ENCODE measurements at regions of chr6 and their contacts with region 1.

Region 1: GRCh38 chr6:116217069-116217468 is 36.8 kb downstream of the TSPYL4 start:
- DNase-seq: peak; percentile 61
- H3K4me3 ChIP-seq: no peak overlapping the region
- H3K27ac ChIP-seq: no peak overlapping the region
- H3K4me1 ChIP-seq: peaks cover 9% of the 10 kb centered on the region
- H3K27me3 ChIP-seq: no peaks in the 10 kb centered on the region
- CTCF ChIP-seq: peak; percentile 15 to 36
- POLR2A ChIP-seq: no peak

Region 2: GRCh38 chr6:115729036-115729435 is 488.0 kb before region 1 on chr6:
- CTCF ChIA-PET with region 1: no interaction called
- POLR2A ChIA-PET with region 1: no interaction called
- dilution Hi-C with region 1: no loop called
- intact Hi-C with region 1: no loop called
- DNase-seq: no peak
- H3K4me3 ChIP-seq: no peak overlapping the region
- H3K27ac ChIP-seq: no peak overlapping the region
- H3K4me1 ChIP-seq: no peaks in the 10 kb centered on the region
- H3K27me3 ChIP-seq: no peaks in the 10 kb centered on the region
- CTCF ChIP-seq: no peak
- POLR2A ChIP-seq: no peak

Region 3: DNA sequence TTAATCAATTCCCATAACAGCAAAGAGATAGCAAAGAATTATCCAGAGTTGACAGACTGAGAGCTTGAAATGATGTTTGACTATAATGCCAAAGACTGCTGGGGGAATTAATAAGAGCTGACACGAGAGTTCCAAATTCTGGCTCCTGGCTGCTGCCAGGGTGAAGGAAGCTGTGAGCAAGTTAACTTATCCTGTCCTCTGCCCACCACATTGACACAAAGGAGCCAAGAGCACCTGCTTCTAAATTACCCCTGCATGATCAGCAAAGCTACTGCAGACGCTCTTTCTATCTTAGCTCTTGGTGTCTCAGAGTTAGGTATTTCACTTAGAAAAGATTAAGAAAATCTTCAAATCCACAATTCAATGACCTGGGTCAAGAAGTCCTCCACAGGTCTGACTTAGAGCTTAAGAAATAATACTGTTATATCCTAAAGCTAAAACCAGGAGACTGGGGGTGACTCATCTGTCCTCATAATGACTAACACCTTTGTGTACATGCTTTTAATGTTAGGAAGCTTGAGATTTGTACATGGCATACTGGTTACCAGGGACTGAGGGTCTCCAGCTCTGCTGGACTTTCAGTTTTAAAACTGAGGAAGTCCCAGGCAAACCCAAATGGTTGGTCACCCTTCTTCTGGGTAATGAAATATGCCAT is 143.2 kb before region 1 on chr6:
- CTCF ChIA-PET with region 1: no interaction called
- POLR2A ChIA-PET with region 1: no interaction called
- dilution Hi-C with region 1: no loop called
- intact Hi-C with region 1: no loop called
- DNase-seq: peak; percentile 20
- H3K4me3 ChIP-seq: no peak overlapping the region
- H3K27ac ChIP-seq: no peak overlapping the region
- H3K4me1 ChIP-seq: no peaks in the 10 kb centered on the region
- H3K27me3 ChIP-seq: no peaks in the 10 kb centered on the region
- CTCF ChIP-seq: no peak
- POLR2A ChIP-seq: no peak

Region 4: DNA sequence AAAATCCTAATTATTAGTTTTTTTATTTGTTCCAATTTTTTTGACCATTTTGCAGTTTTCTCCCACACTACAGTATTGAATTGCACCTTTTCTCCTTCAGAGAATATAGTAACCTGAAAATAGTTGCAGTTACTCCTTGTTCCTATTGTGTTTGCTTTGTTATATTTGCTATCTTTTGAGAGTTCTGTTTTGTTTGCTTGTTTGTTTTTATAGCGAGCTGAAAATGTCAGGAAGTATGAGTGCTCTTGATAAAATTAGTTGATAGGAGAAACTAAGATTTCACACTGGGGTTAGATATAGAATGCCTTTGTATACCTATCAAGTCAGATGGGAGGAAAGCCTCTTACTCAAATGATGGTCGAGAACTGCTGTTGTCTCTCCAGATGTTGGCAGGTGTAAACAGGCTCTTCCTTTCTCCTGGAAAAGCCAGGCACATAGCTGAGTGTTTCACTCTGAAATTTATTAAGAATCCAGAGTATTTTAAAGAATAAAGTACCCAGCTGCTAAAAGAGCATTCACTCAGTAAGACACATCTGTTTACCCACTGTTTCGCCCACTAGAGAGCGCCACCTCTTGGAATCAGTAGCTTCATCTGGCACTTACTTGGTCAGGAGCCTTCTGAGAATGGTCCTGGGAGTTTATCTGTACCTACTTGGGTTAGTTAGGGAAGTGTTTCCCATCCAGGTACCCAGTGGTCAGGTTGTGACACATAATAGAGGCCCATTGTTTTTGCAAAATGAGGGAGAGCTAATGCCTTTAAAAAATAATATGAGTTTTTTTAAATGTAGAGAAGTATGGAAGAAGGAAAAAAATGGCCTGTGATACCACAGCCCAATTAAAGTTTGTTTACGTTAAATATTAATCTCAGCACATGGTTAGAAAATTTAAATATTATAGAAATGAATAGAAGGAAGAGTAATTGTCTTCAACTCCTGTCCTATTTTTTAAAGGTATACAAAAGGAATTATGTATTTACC is 105.2 kb before region 1 on chr6:
- CTCF ChIA-PET with region 1: interaction called, 10 read pairs
- POLR2A ChIA-PET with region 1: no interaction called
- dilution Hi-C with region 1: no loop called
- intact Hi-C with region 1: no loop called
- DNase-seq: peak; percentile 46
- H3K4me3 ChIP-seq: no peak overlapping the region
- H3K27ac ChIP-seq: no peak overlapping the region
- H3K4me1 ChIP-seq: no peaks in the 10 kb centered on the region
- H3K27me3 ChIP-seq: no peaks in the 10 kb centered on the region
- CTCF ChIP-seq: peak; percentile 56 to 69
- POLR2A ChIP-seq: no peak

Region 5: GRCh38 chr6:116238083-116238482 is 21.0 kb after region 1 on chr6:
- CTCF ChIA-PET with region 1: interaction called, 21 read pairs
- POLR2A ChIA-PET with region 1: no interaction called
- dilution Hi-C with region 1: no loop called
- intact Hi-C with region 1: no loop called
- DNase-seq: no peak
- H3K4me3 ChIP-seq: no peak overlapping the region
- H3K27ac ChIP-seq: no peak overlapping the region
- H3K4me1 ChIP-seq: no peaks in the 10 kb centered on the region
- H3K27me3 ChIP-seq: no peaks in the 10 kb centered on the region
- CTCF ChIP-seq: no peak
- POLR2A ChIP-seq: no peak

Region 6: GRCh38 chr6:116268589-116269293 is 51.7 kb after region 1 on chr6:
- CTCF ChIA-PET with region 1: interaction called, 170 read pairs
- POLR2A ChIA-PET with region 1: no interaction called
- dilution Hi-C with region 1: no loop called
- intact Hi-C with region 1: loop called (anchors 1 kb)
- DNase-seq: peak; percentile 82
- H3K4me3 ChIP-seq: no peak overlapping the region
- H3K27ac ChIP-seq: no peak overlapping the region
- H3K4me1 ChIP-seq: no peaks in the 10 kb centered on the region
- H3K27me3 ChIP-seq: no peaks in the 10 kb centered on the region
- CTCF ChIP-seq: peak; percentile 63 to 68
- POLR2A ChIP-seq: no peak

Region 7: GRCh38 chr6:116511404-116512110 is 294.5 kb after region 1 on chr6 and contains the start of gene CALHM5:
- CTCF ChIA-PET with region 1: interaction called, 3 read pairs
- POLR2A ChIA-PET with region 1: no interaction called
- dilution Hi-C with region 1: no loop called
- intact Hi-C with region 1: loop called (anchors 5 kb)
- DNase-seq: peak; percentile 91
- H3K4me3 ChIP-seq: peak within 1 kb of the TSS; percentile 26 to 82 (median 35)
- H3K27ac ChIP-seq: peak within 1 kb of the TSS; percentile 95
- H3K4me1 ChIP-seq: peaks cover 19% of the 10 kb centered on the region
- H3K27me3 ChIP-seq: no peaks in the 10 kb centered on the region
- CTCF ChIP-seq: peak; percentile 55 to 67
- POLR2A ChIP-seq: peak; percentile 67
- total RNA-seq, gene CALHM5: 6.6 and 7.1 TPM in 2 replicates

Region 8: DNA sequence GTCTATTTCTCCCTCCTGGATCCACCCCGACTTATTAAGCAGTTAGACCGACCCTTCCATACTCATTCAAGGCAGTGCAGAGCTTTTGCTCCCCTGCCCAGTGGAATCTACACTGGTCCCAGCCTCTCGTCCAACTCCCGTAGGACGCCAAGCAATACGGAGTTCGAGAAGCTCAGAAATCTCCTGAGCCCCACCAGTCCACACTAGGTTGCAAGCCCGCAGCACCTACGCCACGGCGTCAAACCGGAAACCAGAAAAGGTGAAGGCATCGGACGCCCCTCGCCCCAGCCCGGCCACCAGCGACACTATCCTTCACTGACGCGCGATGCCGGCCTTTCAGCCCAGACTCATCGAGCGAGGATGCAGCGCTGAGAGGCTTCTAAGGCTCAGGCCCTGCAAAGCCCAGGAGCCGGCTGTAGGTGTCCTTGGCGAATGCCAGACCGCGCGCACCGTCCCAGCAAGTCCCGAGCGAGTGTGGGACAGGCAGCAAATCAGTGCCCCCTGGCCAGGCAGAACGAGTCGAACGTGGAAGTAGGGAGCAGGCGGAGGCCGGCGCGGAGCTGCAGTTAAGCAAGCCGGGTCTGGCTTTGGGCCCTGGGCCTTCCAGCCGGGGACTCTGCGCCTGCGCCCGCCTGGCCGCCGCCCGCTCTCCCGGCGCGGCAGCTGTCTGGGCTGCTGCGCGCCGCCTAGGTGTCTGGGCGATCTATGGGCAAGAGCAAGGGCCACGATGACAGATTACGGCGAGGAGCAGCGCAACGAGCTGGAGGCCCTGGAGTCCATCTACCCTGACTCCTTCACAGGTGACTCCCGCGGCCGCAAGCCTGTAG is 354.0 kb after region 1 on chr6 and contains the start of gene RWDD1:
- CTCF ChIA-PET with region 1: interaction called, 11 read pairs
- POLR2A ChIA-PET with region 1: no interaction called
- dilution Hi-C with region 1: no loop called
- intact Hi-C with region 1: no loop called
- DNase-seq: peak; percentile 99
- H3K4me3 ChIP-seq: peak within 1 kb of the TSS; percentile 87 to 98 (median 98)
- H3K27ac ChIP-seq: peak within 1 kb of the TSS; percentile 84
- H3K4me1 ChIP-seq: peaks cover 33% of the 10 kb centered on the region
- H3K27me3 ChIP-seq: no peaks in the 10 kb centered on the region
- CTCF ChIP-seq: no peak
- POLR2A ChIP-seq: peak; percentile 89
- total RNA-seq, gene RWDD1: 37.9 and 44.2 TPM in 2 replicates

Measured in endothelial cell of umbilical vein (primary cell).